Ovary (tissue), 10 donors: ENCODE measurements at regions of chr16 and their contacts with region 1.

Region 1: DNA sequence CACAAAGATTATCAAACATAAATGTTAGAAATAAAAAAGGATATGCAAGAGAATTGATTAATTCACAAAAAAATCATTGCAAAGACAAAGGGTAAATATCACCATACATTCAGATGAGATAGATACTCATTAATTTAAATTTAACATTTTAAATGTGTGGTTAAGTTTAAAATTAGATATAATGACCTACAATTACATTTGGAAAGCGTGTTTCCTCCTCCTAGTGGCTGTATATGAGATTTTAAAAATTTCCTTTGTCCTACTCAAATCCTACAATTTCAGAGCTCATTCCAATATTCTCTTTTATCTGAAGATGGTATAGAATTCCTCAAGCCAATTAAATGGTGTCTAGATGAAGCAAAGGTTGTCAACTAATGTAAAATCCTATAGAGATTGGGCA is 169.2 kb upstream of the CDH8 start:
- DNase-seq: no peak
- H3K4me3 ChIP-seq: no peak overlapping the region
- H3K27ac ChIP-seq: no peak overlapping the region
- H3K4me1 ChIP-seq: no peaks in the 10 kb centered on the region
- H3K27me3 ChIP-seq: no peaks in the 10 kb centered on the region
- CTCF ChIP-seq: no peak
- EP300 ChIP-seq: no peak
- POLR2A ChIP-seq: no peak

Region 2: GRCh38 chr16:61957075-61957855 is 248.2 kb before region 1 on chr16:
- intact Hi-C with region 1: loop called in 1 of 4 experiments (anchors 5 kb)
- DNase-seq: no peak
- H3K4me3 ChIP-seq: no peak overlapping the region
- H3K27ac ChIP-seq: no peak overlapping the region
- H3K4me1 ChIP-seq: no peaks in the 10 kb centered on the region
- H3K27me3 ChIP-seq: no peaks in the 10 kb centered on the region
- CTCF ChIP-seq: no peak
- EP300 ChIP-seq: no peak
- POLR2A ChIP-seq: no peak

Region 3: GRCh38 chr16:61993076-61993475 is 212.4 kb before region 1 on chr16:
- intact Hi-C with region 1: no loop called
- DNase-seq: no peak
- H3K4me3 ChIP-seq: no peak overlapping the region
- H3K27ac ChIP-seq: no peak overlapping the region
- H3K4me1 ChIP-seq: no peaks in the 10 kb centered on the region
- H3K27me3 ChIP-seq: no peaks in the 10 kb centered on the region
- CTCF ChIP-seq: no peak
- EP300 ChIP-seq: no peak
- POLR2A ChIP-seq: no peak